HEK293 (cell line): ENCODE measurements at regions of chr1 and their contacts with region 1.

Region 1: GRCh38 chr1:67832737-67833601 is at the start of gene GNG12:
- H3K4me3 ChIP-seq: peak within 1 kb of the TSS; percentile 62
- H3K27ac ChIP-seq: peak within 1 kb of the TSS; percentile 91
- H3K4me1 ChIP-seq: peaks cover 31% of the 10 kb centered on the region
- CTCF ChIP-seq: peak; percentile 64

Region 2: GRCh38 chr1:67803380-67804279 is 29.3 kb before region 1 on chr1:
- CTCF ChIA-PET with region 1: no interaction called
- POLR2A ChIA-PET with region 1: interaction called, 10 read pairs
- H3K4me3 ChIP-seq: no peak overlapping the region
- H3K27ac ChIP-seq: no peak overlapping the region
- H3K4me1 ChIP-seq: 0 out of 2 replicates have a peak, but pooled peaks cover 5% of the 10 kb centered on the region
- CTCF ChIP-seq: no peak

Region 3: GRCh38 chr1:67945733-67946374 is 112.9 kb after region 1 on chr1:
- CTCF ChIA-PET with region 1: no interaction called
- POLR2A ChIA-PET with region 1: no interaction called
- H3K4me3 ChIP-seq: no peak overlapping the region
- H3K27ac ChIP-seq: no peak overlapping the region
- H3K4me1 ChIP-seq: no peaks in the 10 kb centered on the region
- CTCF ChIP-seq: no peak